MCF 10A (cell line): ENCODE measurements at regions of chr2 and their contacts with region 1.

Region 1: GRCh38 chr2:169452080-169452479 is 27.2 kb upstream of the BBS5 start:
- DNase-seq: peak; percentile 65
- H3K4me3 Mint-ChIP-seq: no peak overlapping the region
- H3K27ac Mint-ChIP-seq: no peak overlapping the region
- H3K4me1 Mint-ChIP-seq: no peaks in the 10 kb centered on the region
- H3K27me3 Mint-ChIP-seq: peaks cover 11% of the 10 kb centered on the region
- CTCF ChIP-seq: peak; percentile 61

Region 2: GRCh38 chr2:169438460-169439072 is 13.5 kb before region 1 on chr2:
- CTCF ChIA-PET with region 1: interaction called, 12 read pairs
- POLR2A ChIA-PET with region 1: interaction called, 3 read pairs
- intact Hi-C with region 1: no loop called
- DNase-seq: no peak
- H3K4me3 Mint-ChIP-seq: no peak overlapping the region
- H3K27ac Mint-ChIP-seq: no peak overlapping the region
- H3K4me1 Mint-ChIP-seq: no peaks in the 10 kb centered on the region
- H3K27me3 Mint-ChIP-seq: peaks cover 94% of the 10 kb centered on the region
- CTCF ChIP-seq: no peak

Region 3: DNA sequence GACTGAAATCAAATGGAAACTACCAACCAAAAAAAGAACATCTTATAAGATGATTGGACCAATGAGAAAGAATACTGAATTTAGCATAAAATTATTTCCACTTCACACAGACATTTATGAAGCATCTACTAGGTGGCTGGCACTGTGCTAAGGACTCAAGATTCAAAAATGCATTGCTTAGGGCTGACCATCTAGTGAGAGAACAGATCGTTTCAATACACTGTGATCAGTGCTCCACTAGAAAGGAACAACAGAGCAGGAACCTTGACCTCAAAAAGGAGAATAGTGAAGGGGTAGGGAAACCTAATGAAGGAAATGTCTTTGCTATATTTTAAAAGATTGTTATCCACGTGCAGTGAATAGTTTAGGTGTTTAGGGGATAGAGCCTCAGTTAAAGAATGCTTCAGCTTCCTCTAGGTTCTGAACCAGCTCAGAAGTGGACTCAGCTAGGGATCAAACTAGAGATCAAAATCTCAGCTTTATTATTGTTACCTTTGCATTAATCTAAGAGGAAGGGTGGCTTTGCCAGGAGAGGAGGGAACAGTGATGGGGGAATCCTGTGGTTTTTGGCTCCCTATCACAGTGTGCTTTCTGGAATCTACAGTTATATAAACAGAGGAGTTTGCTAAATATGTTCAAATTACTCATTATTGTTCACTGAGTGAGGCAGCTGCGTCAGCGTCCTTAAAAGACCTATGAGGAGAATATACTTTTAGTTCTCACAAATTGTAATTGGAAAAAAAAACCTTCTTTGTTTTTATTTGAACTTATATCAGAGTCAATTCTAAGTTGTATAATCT is 11.0 kb after region 1 on chr2:
- CTCF ChIA-PET with region 1: interaction called, 33 read pairs
- POLR2A ChIA-PET with region 1: interaction called, 3 read pairs
- intact Hi-C with region 1: no loop called
- DNase-seq: peak; percentile 63
- H3K4me3 Mint-ChIP-seq: no peak overlapping the region
- H3K27ac Mint-ChIP-seq: peak overlapping the region; percentile 6
- H3K4me1 Mint-ChIP-seq: peaks cover 14% of the 10 kb centered on the region
- H3K27me3 Mint-ChIP-seq: no peaks in the 10 kb centered on the region
- CTCF ChIP-seq: no peak

Region 4: GRCh38 chr2:169590804-169591203 is 138.7 kb after region 1 on chr2:
- CTCF ChIA-PET with region 1: no interaction called
- POLR2A ChIA-PET with region 1: no interaction called
- intact Hi-C with region 1: no loop called
- DNase-seq: no peak
- H3K4me3 Mint-ChIP-seq: no peak overlapping the region
- H3K27ac Mint-ChIP-seq: no peak overlapping the region
- H3K4me1 Mint-ChIP-seq: no peaks in the 10 kb centered on the region
- H3K27me3 Mint-ChIP-seq: no peaks in the 10 kb centered on the region
- CTCF ChIP-seq: no peak

Region 5: GRCh38 chr2:169765523-169765922 is 313.4 kb after region 1 on chr2:
- CTCF ChIA-PET with region 1: interaction called, 18 read pairs
- POLR2A ChIA-PET with region 1: no interaction called
- intact Hi-C with region 1: no loop called
- DNase-seq: peak; percentile 70
- H3K4me3 Mint-ChIP-seq: no peak overlapping the region
- H3K27ac Mint-ChIP-seq: no peak overlapping the region
- H3K4me1 Mint-ChIP-seq: no peaks in the 10 kb centered on the region
- H3K27me3 Mint-ChIP-seq: no peaks in the 10 kb centered on the region
- CTCF ChIP-seq: no peak